Panc1 (cell line): ENCODE measurements at regions of chr2 and their contacts with region 1.

Region 1: DNA sequence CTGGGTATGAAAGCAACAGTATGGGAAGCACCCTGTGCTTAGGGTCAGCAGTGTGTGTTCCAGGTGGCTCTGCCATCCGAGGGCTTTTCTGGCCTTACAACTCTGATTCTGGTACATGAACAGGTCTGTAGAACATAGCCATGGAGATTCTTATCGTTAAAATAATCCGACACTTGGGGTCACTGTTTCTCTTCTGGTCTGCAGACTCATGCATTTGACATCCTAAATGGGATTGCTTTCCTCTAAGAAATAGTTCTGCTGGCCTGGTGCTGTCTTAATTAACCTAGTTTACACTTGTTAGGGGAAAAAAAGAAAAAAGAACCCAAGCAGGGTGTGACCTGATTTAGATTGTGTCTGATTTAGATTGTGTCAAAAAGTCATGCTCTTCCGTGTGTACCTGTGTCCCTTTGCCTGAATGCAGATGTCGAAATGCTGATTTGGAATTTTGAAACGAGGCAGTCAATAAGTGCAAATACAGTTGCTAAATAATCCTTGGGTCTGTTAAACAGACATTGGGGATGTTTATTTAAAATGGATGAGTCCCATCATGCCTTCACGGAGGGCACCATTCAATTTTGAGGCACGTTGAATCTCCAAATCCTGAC is 59.6 kb downstream of the TRPM8 start:
- DNase-seq: peak; percentile 93
- ATAC-seq: peak; percentile 74
- H3K4me3 ChIP-seq: no peak overlapping the region
- H3K27ac ChIP-seq: peak overlapping the region; percentile 97
- H3K4me1 ChIP-seq: peaks cover 54% of the 10 kb centered on the region
- H3K27me3 ChIP-seq: no peaks in the 10 kb centered on the region
- CTCF ChIP-seq: peak; percentile 79

Region 2: GRCh38 chr2:233690435-233690834 is 286.4 kb before region 1 on chr2:
- CTCF ChIA-PET with region 1: no interaction called
- POLR2A ChIA-PET with region 1: no interaction called
- in situ Hi-C with region 1: no loop called
- intact Hi-C with region 1: no loop called
- DNase-seq: no peak
- ATAC-seq: no peak
- H3K4me3 ChIP-seq: no peak overlapping the region
- H3K27ac ChIP-seq: no peak overlapping the region
- H3K4me1 ChIP-seq: peaks cover 8% of the 10 kb centered on the region
- H3K27me3 ChIP-seq: no peaks in the 10 kb centered on the region
- CTCF ChIP-seq: no peak

Region 3: DNA sequence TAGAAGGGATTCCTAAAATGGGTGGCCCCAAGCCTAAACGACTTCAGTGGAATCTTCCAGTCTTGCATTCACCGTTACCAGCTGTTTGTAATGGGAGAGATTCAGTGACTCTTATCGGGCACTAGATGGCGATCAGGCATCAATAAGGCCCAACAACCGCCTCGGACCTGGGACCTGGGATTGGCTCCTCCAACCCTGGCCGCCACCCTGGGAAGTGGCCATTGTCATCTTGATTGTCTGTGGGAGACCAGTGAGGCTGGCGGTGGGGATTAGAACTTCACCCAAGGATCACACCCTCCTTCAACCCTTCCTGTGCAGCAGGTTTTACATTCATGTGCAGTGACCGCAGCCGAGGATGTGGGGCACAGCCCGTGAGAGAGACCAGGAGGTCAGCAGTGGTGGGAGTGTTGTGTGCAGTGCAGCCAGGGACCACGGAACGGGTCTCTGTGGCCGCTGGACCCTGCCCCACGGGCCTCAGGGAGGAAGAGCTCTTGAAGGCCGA is 159.0 kb after region 1 on chr2:
- CTCF ChIA-PET with region 1: no interaction called
- POLR2A ChIA-PET with region 1: no interaction called
- in situ Hi-C with region 1: no loop called
- intact Hi-C with region 1: loop called (anchors 5 kb)
- DNase-seq: peak; percentile 50
- ATAC-seq: peak; percentile 92
- H3K4me3 ChIP-seq: no peak overlapping the region
- H3K27ac ChIP-seq: peak overlapping the region; percentile 99
- H3K4me1 ChIP-seq: peaks cover 16% of the 10 kb centered on the region
- H3K27me3 ChIP-seq: no peaks in the 10 kb centered on the region
- CTCF ChIP-seq: peak; percentile 89

Region 4: DNA sequence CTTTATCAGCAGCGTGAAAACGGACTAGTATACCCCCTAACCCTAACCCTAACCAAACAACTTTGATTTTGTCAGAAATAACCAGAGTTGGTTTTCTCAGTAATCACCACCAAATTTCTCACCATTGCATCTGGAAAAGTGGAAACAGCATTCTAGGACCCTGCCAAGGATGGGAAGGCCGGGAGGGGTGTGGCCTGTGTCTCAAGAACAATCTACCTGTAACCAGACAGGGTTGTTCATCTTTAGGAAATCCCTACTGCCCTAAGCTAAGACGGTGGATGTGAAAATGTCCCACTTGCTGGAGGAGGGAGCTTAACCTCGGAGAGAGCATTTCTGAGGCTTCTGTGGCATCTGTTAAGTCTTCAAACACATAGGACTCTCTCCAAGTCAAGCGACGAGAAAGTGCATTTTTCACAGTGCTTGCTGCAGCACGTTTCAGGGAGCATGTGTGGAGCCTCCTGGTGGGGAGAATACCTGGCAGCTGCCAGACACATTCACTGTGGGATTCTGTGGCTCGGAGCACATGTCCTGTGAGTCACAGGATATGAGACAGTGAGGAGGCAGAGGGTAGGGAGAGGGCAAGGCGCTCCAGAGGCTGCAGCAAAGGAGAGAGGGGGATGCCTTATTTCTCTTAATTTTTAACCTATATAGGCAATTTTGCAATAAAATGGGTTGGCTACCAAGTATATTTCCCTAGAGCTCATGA is 281.2 kb after region 1 on chr2:
- CTCF ChIA-PET with region 1: no interaction called
- POLR2A ChIA-PET with region 1: no interaction called
- in situ Hi-C with region 1: no loop called
- intact Hi-C with region 1: loop called (anchors 5 kb)
- DNase-seq: peak; percentile 94
- ATAC-seq: peak; percentile 98
- H3K4me3 ChIP-seq: no peak overlapping the region
- H3K27ac ChIP-seq: peak overlapping the region; percentile 99
- H3K4me1 ChIP-seq: peaks cover 45% of the 10 kb centered on the region
- H3K27me3 ChIP-seq: no peaks in the 10 kb centered on the region
- CTCF ChIP-seq: peak; percentile 82

Region 5: GRCh38 chr2:234500394-234501006 is 523.7 kb after region 1 on chr2:
- CTCF ChIA-PET with region 1: interaction called, 4 read pairs
- POLR2A ChIA-PET with region 1: no interaction called
- in situ Hi-C with region 1: no loop called
- intact Hi-C with region 1: loop called (anchors 2 kb)
- DNase-seq: no peak
- ATAC-seq: peak; percentile 51
- H3K4me3 ChIP-seq: no peak overlapping the region
- H3K27ac ChIP-seq: peak overlapping the region; percentile 89
- H3K4me1 ChIP-seq: peaks cover 36% of the 10 kb centered on the region
- H3K27me3 ChIP-seq: no peaks in the 10 kb centered on the region
- CTCF ChIP-seq: peak; percentile 87

Region 6: GRCh38 chr2:235116885-235117492 is 1140.2 kb after region 1 on chr2:
- CTCF ChIA-PET with region 1: no interaction called
- POLR2A ChIA-PET with region 1: no interaction called
- in situ Hi-C with region 1: no loop called
- intact Hi-C with region 1: loop called (anchors 10 kb)
- DNase-seq: peak; percentile 25
- ATAC-seq: no peak; the same call in 1 of the 2 replicates
- H3K4me3 ChIP-seq: no peak overlapping the region
- H3K27ac ChIP-seq: peak overlapping the region; percentile 25; the same call in 1 of the 2 replicates
- H3K4me1 ChIP-seq: peaks cover 5% of the 10 kb centered on the region; the same call in 1 of the 2 replicates
- H3K27me3 ChIP-seq: no peaks in the 10 kb centered on the region
- CTCF ChIP-seq: peak; percentile 71; the same call in 1 of the 2 replicates